Activated CD8-positive, alpha-beta T cell treated with anti-CD3 and anti-CD28 coated beads, Interleukin-2, amount 10 ng/mL, durations not matched to agents 7 days and 5 days (primary cell): ENCODE measurements at regions of chr17 and their contacts with region 1.

Region 1: GRCh38 chr17:48093341-48094045 is 7.8 kb downstream of the CBX1 start:
- DNase-seq: no peak
- ATAC-seq: no peak
- H3K4me3 Mint-ChIP-seq: no peak overlapping the region
- H3K27ac Mint-ChIP-seq: no peak overlapping the region
- H3K4me1 Mint-ChIP-seq: peaks cover 11% of the 10 kb centered on the region
- H3K27me3 Mint-ChIP-seq: no peaks in the 10 kb centered on the region

Region 2: GRCh38 chr17:47895856-47896671 is 197.4 kb before region 1 on chr17 and contains the start of gene SP2:
- CTCF ChIA-PET with region 1: no interaction called
- POLR2A ChIA-PET with region 1: no interaction called
- DNase-seq: peak; percentile 100
- ATAC-seq: peak; percentile 96
- H3K4me3 Mint-ChIP-seq: peak within 1 kb of the TSS; percentile 97
- H3K27ac Mint-ChIP-seq: peak within 1 kb of the TSS; percentile 95
- H3K4me1 Mint-ChIP-seq: peaks cover 44% of the 10 kb centered on the region
- H3K27me3 Mint-ChIP-seq: no peaks in the 10 kb centered on the region
- total RNA-seq, gene SP2: 23.7 to 24.5 TPM

Region 3: DNA sequence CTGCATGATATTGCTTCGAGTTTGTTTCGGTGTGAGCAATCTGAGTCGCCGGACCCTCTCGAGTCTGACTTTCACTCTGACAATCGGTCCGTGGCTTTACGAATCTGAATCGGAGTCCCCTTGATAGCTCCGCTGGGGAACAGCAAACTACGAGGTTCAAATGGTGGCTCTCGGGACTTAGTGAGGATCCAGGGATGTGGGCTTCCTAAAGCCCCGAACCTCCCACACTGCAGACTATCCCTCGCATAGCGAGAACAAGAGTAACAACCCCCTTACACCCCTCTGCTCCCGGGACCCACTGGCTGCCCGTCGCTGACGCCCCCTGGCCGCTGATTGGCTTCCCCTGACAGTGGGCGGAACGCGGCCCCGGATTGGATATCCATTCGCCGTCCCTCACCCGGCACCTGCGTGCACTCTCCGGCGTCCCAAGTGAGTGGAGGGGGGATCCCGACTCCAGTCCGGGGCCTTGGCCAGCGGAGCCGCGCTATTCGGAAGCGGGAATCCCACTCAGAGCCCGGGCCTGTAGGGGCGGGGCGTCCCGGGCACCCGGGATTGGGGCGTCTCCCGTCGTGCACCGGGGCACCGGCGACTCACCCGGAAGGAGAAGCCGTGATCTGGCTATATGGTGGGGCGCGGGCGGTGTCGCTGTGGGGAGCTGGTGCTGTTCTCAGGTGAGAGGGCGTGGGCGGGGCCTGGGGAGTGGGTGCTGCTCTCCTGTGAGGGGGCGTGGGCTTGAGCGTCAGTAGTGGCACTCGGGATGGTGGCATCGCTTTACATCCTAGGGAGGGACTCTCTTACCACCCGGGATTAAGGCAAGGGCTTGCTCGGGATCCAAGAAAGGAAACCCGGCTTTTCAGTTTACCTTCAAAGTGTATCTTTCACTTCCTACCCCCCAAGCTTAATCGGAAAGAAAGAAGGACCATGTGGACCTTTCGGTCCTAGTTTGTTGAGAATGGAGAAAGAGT is 14.0 kb after region 1 on chr17 and contains the start of gene SNX11:
- CTCF ChIA-PET with region 1: interaction called, 30 read pairs
- POLR2A ChIA-PET with region 1: interaction called, 14 read pairs
- DNase-seq: peak; percentile 94
- ATAC-seq: peak; percentile 95
- H3K4me3 Mint-ChIP-seq: peak within 1 kb of the TSS; percentile 99
- H3K27ac Mint-ChIP-seq: peak within 1 kb of the TSS; percentile 98
- H3K4me1 Mint-ChIP-seq: peaks cover 67% of the 10 kb centered on the region
- H3K27me3 Mint-ChIP-seq: no peaks in the 10 kb centered on the region
- total RNA-seq, gene SNX11: 33.3 to 34.2 TPM